Heart right ventricle (tissue), 16 donors: ENCODE measurements at regions of chr5 and their contacts with region 1.

Region 1: GRCh38 chr5:146068977-146069779 is 36.2 kb downstream of the PLAC8L1 start:
- DNase-seq: no peak
- ATAC-seq: no peak
- H3K4me3 ChIP-seq: no peak overlapping the region
- H3K27ac ChIP-seq: peak overlapping the region in 9 of 10 donors; percentile 12 to 89 (median 77)
- H3K4me1 ChIP-seq: peaks cover 10 to 81% (median 41%) of the 10 kb centered on the region in 9 donors
- H3K27me3 ChIP-seq: no peaks in the 10 kb centered on the region
- CTCF ChIP-seq: no peak

Region 2: GRCh38 chr5:146103594-146103993 is 34.4 kb after region 1 on chr5:
- intact Hi-C with region 1: loop called in 1 of 10 experiments (anchors 5 kb)
- DNase-seq: peak in 1 of 2 donors; percentile 6
- ATAC-seq: peak; percentile 60 to 96 (median 76)
- H3K4me3 ChIP-seq: no peak overlapping the region
- H3K27ac ChIP-seq: peak overlapping the region in 8 of 10 donors; percentile 37 to 73 (median 54)
- H3K4me1 ChIP-seq: peaks cover 0 to 12% (median 3%) of the 10 kb centered on the region in 9 donors
- H3K27me3 ChIP-seq: no peaks in the 10 kb centered on the region
- CTCF ChIP-seq: no peak

Region 3: GRCh38 chr5:146111409-146111808 is 42.2 kb after region 1 on chr5:
- intact Hi-C with region 1: loop called in 1 of 10 experiments (anchors 10 kb)
- DNase-seq: no peak
- ATAC-seq: no peak
- H3K4me3 ChIP-seq: no peak overlapping the region
- H3K27ac ChIP-seq: no peak overlapping the region
- H3K4me1 ChIP-seq: peaks cover 0 to 5% (median 0%) of the 10 kb centered on the region in 9 donors
- H3K27me3 ChIP-seq: no peaks in the 10 kb centered on the region
- CTCF ChIP-seq: no peak

Region 4: DNA sequence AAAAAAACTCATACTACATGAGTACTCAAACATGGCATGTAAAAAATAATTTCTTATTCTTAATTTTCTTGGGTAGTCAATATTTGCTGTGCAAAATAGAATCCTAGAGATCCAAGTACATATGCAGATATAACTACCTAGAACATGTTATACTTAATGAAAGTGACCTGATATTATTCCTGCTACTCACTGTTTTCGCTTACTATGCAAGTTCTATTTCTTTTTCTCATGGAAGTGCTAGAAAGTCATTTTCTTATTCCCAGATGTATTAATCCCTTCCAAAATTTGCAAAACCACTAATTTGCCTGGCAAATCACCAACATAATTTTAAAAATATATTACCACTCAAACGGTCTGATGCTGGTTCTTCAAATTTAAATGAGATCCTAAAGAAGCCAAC is 55.4 kb after region 1 on chr5:
- intact Hi-C with region 1: loop called in 3 of 10 experiments (anchors 5 to 10 kb)
- DNase-seq: no peak
- ATAC-seq: no peak
- H3K4me3 ChIP-seq: no peak overlapping the region
- H3K27ac ChIP-seq: no peak overlapping the region
- H3K4me1 ChIP-seq: no peaks in the 10 kb centered on the region
- H3K27me3 ChIP-seq: no peaks in the 10 kb centered on the region
- CTCF ChIP-seq: no peak

Region 5: GRCh38 chr5:146283344-146283761 is 214.2 kb after region 1 on chr5:
- intact Hi-C with region 1: no loop called
- DNase-seq: no peak
- ATAC-seq: peak in 4 of 8 donors; percentile 35 to 70 (median 46)
- H3K4me3 ChIP-seq: no peak overlapping the region
- H3K27ac ChIP-seq: peak overlapping the region in 2 of 10 donors; percentile 12 to 44
- H3K4me1 ChIP-seq: peaks cover 0 to 11% (median 0%) of the 10 kb centered on the region in 9 donors
- H3K27me3 ChIP-seq: no peaks in the 10 kb centered on the region
- CTCF ChIP-seq: no peak